Activated CD8-positive, alpha-beta T cell treated with anti-CD3 and anti-CD28 coated beads, Interleukin-2, amount 10 ng/mL, durations not matched to agents 7 days and 5 days (primary cell): ENCODE measurements at regions of chr22 and their contacts with region 1.

Region 1: GRCh38 chr22:37608477-37609239 is at the start of gene GGA1:
- DNase-seq: peak; percentile 98
- ATAC-seq: peak; percentile 81
- H3K4me3 Mint-ChIP-seq: peak within 1 kb of the TSS; percentile 100
- H3K27ac Mint-ChIP-seq: peak within 1 kb of the TSS; percentile 98
- H3K4me1 Mint-ChIP-seq: peaks cover 72% of the 10 kb centered on the region
- H3K27me3 Mint-ChIP-seq: peaks cover 4% of the 10 kb centered on the region
- total RNA-seq, gene GGA1: 66.3 to 69.5 TPM

Region 2: GRCh38 chr22:37544955-37545699 is 63.5 kb before region 1 on chr22:
- CTCF ChIA-PET with region 1: interaction called, 14 read pairs
- POLR2A ChIA-PET with region 1: no interaction called
- DNase-seq: peak; percentile 71
- ATAC-seq: peak; percentile 74
- H3K4me3 Mint-ChIP-seq: no peak overlapping the region
- H3K27ac Mint-ChIP-seq: no peak overlapping the region
- H3K4me1 Mint-ChIP-seq: peaks cover 33% of the 10 kb centered on the region
- H3K27me3 Mint-ChIP-seq: peaks cover 13% of the 10 kb centered on the region

Region 3: GRCh38 chr22:37588546-37589215 is 20.0 kb before region 1 on chr22:
- CTCF ChIA-PET with region 1: interaction called, 126 read pairs
- POLR2A ChIA-PET with region 1: interaction called, 3 read pairs
- DNase-seq: no peak
- ATAC-seq: no peak
- H3K4me3 Mint-ChIP-seq: no peak overlapping the region
- H3K27ac Mint-ChIP-seq: no peak overlapping the region
- H3K4me1 Mint-ChIP-seq: peaks cover 11% of the 10 kb centered on the region
- H3K27me3 Mint-ChIP-seq: peaks cover 12% of the 10 kb centered on the region

Region 4: GRCh38 chr22:37633625-37634416 is 25.2 kb after region 1 on chr22:
- CTCF ChIA-PET with region 1: interaction called, 114 read pairs
- POLR2A ChIA-PET with region 1: interaction called, 23 read pairs
- DNase-seq: peak; percentile 81
- ATAC-seq: peak; percentile 53
- H3K4me3 Mint-ChIP-seq: peak overlapping the region; percentile 72
- H3K27ac Mint-ChIP-seq: peak overlapping the region; percentile 97
- H3K4me1 Mint-ChIP-seq: peaks cover 85% of the 10 kb centered on the region
- H3K27me3 Mint-ChIP-seq: no peaks in the 10 kb centered on the region

Region 5: DNA sequence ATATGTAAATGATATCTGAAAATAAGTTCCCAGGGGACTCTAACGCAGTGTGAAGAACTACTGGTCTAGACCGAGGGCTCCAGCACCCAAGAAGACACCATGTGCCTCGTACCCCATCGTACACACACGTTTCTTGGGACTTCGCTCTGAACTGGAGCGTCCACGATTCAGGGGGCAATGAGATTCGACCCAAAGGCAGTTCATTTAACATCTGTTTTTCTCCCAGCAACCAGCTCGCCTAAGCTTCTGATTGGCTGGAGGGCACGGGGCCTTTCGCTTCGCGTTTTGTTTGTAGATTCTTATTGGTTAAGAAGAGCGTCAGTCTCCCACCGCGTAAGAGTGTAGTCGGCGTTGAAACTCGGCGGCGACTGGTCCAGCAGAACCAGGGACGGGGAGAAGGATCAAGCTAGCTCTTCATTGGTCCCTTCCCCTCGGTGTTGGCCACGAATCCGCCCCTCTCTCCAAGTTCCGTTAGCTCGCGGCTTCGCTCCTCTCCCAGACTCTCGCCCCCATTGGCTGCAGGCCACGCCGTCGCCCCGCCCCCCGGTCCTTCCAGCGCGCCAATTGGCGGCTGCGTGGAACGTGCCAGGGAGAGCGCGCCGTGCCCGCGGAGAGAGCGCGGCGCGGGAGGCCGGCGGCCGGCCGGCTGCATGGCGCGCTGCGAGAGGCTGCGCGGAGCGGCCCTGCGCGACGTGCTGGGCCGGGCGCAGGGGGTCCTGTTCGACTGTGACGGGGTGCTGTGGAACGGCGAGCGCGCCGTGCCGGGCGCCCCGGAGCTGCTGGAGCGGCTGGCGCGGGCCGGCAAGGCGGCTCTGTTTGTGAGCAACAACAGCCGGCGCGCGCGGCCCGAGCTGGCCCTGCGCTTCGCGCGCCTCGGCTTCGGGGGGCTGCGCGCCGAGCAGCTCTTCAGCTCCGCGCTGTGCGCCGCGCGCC is 49.7 kb after region 1 on chr22 and contains the start of gene PDXP:
- CTCF ChIA-PET with region 1: interaction called, 23 read pairs
- POLR2A ChIA-PET with region 1: interaction called, 7 read pairs
- DNase-seq: peak; percentile 99
- ATAC-seq: peak; percentile 98
- H3K4me3 Mint-ChIP-seq: peak within 1 kb of the TSS; percentile 87
- H3K27ac Mint-ChIP-seq: peak within 1 kb of the TSS; percentile 87
- H3K4me1 Mint-ChIP-seq: peaks cover 37% of the 10 kb centered on the region
- H3K27me3 Mint-ChIP-seq: no peaks in the 10 kb centered on the region
- total RNA-seq, gene PDXP: 31.5 to 33.5 TPM

Region 6: GRCh38 chr22:37801946-37802309 is 193.3 kb after region 1 on chr22:
- CTCF ChIA-PET with region 1: no interaction called
- POLR2A ChIA-PET with region 1: no interaction called
- DNase-seq: no peak
- ATAC-seq: no peak
- H3K4me3 Mint-ChIP-seq: peak overlapping the region; percentile 64
- H3K27ac Mint-ChIP-seq: no peak overlapping the region
- H3K4me1 Mint-ChIP-seq: peaks cover 37% of the 10 kb centered on the region
- H3K27me3 Mint-ChIP-seq: peaks cover 48% of the 10 kb centered on the region